Activated B cell treated with CpG ODN at 0.5 μM for 24 hours (primary cell): ENCODE measurements at regions of chr11 and their contacts with region 1.

Region 1: DNA sequence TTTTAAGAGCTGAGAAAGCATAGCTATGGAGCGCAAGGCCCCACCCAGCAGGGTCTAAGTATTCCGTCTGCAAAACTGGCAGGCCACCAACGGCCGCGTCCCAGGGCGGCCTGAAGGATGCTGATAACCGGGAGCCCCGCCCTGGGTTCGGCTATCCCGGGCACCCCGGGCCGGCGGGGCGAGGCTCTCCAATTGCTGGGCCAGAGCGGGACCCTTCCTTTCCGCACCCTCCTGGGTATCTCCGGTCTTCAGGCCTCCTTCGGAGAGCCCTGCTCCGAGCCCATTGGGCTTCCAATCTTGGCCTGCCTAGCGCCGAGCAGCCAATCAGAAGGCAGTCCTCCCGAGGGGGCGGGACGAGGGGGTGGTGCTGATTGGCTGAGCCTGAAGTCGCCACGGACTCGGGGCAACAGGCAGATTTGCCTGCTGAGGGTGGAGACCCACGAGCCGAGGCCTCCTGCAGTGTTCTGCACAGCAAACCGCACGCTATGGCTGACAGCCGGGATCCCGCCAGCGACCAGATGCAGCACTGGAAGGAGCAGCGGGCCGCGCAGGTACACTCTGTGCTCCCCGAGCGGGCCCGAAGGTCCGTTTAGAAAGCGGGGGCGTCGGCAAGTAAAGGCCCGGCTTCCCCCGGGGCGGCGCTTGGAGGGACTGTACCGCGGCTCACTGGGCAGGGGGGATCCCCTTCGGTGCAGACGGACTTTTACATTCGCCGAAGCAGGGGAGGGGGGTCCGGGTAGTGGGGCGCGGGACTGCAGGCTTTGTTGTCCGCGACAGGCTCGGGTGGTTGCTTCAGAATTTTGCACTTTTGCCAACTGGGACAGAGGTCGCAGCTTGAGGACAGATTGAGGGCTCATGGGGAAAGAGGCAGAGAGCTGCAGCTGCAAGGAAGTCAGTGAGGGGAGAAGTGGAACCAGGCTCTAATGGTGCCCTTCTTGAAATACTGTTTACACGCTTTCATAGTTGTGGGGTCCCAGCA is at the start of gene CAT:
- DNase-seq: peak; percentile 96
- ATAC-seq: peak; percentile 90
- H3K4me3 Mint-ChIP-seq: peak within 1 kb of the TSS; percentile 99
- H3K27ac Mint-ChIP-seq: peak within 1 kb of the TSS; percentile 98
- H3K4me1 Mint-ChIP-seq: peaks cover 43% of the 10 kb centered on the region
- H3K27me3 Mint-ChIP-seq: no peaks in the 10 kb centered on the region
- CTCF ChIP-seq: no peak
- total RNA-seq, gene CAT: 79.8 and 81.2 TPM in 2 replicates

Region 2: DNA sequence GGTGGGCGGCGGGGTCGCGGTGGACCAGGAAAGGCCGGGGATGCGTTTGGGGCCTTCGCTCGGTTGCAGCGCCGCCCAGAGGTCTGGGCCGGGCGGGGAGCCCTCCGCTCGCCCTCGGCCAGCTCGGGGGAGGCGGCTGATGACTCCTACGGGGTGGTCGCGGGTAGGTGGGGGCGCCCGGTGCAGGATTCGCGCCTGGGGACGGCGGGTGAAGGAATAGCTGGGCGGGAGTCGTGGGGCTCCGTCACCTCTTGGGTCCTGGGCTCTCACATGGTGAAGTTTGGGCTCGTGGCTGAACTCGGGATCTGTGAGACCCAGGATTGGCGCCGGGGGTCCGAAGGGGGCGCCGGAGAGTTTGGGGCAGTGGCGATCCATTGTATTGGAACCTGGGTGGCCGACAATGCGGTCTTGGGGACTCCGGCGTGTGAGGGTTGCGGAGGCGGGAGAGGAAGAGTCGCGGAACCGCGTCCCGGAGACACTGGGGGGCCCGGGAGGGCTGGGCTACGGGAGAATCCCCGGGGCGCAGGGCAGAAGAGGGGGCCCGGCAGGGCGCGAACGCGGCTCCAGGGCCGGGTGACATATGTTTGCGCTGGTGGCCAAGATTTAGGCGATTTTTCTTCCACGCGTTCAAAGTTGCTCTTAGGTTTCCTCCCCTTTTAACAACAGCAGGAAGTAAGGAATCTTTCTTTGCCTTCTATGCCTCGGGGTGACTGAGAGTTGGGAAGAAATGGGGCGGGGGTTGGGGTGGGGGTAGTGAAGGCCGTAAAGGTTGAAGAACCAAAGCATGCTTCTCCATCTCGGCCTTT is 1545.3 kb before region 1 on chr11:
- CTCF ChIA-PET with region 1: no interaction called
- POLR2A ChIA-PET with region 1: no interaction called
- intact Hi-C with region 1: loop called (anchors 5 kb)
- DNase-seq: peak; percentile 65
- ATAC-seq: peak; percentile 51
- H3K4me3 Mint-ChIP-seq: peak overlapping the region; percentile 94
- H3K27ac Mint-ChIP-seq: peak overlapping the region; percentile 82
- H3K4me1 Mint-ChIP-seq: peaks cover 30% of the 10 kb centered on the region
- H3K27me3 Mint-ChIP-seq: no peaks in the 10 kb centered on the region
- CTCF ChIP-seq: no peak

Region 3: GRCh38 chr11:33773987-33774735 is 664.7 kb before region 1 on chr11 and contains the start of gene FBXO3:
- CTCF ChIA-PET with region 1: no interaction called
- POLR2A ChIA-PET with region 1: interaction called, 4 read pairs
- intact Hi-C with region 1: loop called (anchors 2 kb)
- DNase-seq: peak; percentile 80
- ATAC-seq: peak; percentile 92
- H3K4me3 Mint-ChIP-seq: peak within 1 kb of the TSS; percentile 96
- H3K27ac Mint-ChIP-seq: peak within 1 kb of the TSS; percentile 94
- H3K4me1 Mint-ChIP-seq: peaks cover 38% of the 10 kb centered on the region
- H3K27me3 Mint-ChIP-seq: peaks cover 15% of the 10 kb centered on the region
- CTCF ChIP-seq: no peak
- total RNA-seq, gene FBXO3: 22.3 and 23.5 TPM in 2 replicates

Region 4: DNA sequence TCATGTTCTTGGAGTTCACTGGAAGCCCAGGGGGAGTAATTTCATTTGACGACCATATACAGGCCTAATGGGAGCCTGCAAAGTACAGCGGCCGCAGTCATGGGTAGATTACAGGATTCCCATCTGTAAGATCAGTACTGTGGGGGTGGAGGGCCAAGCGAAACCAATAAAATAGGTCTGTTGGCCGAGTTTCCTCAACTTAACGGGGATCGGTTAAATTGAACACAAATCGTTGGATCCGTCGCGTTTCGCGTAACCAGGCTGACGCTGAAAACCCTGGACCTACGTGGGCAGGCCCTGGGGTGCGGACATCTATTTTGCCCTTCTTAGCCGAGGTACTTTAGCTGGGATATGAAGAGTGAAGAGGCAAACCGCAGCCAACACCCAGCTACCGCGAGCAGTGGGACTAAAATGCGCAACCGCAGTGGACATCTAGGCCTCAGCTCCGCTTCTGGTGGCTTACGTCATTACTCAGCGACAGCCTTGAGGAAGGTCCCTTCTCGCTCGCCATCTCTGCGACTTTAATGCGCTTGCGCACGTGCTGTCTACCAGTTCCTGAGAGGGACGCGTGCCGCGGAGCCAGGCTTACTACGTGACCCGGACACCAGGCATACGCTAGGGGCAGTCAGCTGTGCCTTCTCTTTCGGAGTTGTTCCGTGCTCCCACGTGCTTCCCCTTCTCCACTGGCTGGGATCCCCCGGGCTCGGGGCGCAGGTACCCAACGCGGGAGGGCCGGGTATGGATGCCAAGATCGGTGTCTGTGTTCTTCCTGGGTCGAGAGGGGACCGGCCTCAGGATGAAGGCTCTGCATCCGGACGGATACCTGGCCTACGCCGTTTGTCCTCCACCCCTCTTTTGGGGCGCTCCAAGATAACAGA is 333.5 kb before region 1 on chr11 and contains the start of gene NAT10:
- CTCF ChIA-PET with region 1: no interaction called
- POLR2A ChIA-PET with region 1: interaction called, 3 read pairs
- intact Hi-C with region 1: loop called (anchors 1 kb)
- DNase-seq: peak; percentile 91
- ATAC-seq: peak; percentile 92
- H3K4me3 Mint-ChIP-seq: peak within 1 kb of the TSS; percentile 97
- H3K27ac Mint-ChIP-seq: peak within 1 kb of the TSS; percentile 98
- H3K4me1 Mint-ChIP-seq: peaks cover 41% of the 10 kb centered on the region
- H3K27me3 Mint-ChIP-seq: peaks cover 2% of the 10 kb centered on the region
- CTCF ChIP-seq: no peak
- total RNA-seq, gene NAT10: 107 and 120 TPM in 2 replicates

Region 5: DNA sequence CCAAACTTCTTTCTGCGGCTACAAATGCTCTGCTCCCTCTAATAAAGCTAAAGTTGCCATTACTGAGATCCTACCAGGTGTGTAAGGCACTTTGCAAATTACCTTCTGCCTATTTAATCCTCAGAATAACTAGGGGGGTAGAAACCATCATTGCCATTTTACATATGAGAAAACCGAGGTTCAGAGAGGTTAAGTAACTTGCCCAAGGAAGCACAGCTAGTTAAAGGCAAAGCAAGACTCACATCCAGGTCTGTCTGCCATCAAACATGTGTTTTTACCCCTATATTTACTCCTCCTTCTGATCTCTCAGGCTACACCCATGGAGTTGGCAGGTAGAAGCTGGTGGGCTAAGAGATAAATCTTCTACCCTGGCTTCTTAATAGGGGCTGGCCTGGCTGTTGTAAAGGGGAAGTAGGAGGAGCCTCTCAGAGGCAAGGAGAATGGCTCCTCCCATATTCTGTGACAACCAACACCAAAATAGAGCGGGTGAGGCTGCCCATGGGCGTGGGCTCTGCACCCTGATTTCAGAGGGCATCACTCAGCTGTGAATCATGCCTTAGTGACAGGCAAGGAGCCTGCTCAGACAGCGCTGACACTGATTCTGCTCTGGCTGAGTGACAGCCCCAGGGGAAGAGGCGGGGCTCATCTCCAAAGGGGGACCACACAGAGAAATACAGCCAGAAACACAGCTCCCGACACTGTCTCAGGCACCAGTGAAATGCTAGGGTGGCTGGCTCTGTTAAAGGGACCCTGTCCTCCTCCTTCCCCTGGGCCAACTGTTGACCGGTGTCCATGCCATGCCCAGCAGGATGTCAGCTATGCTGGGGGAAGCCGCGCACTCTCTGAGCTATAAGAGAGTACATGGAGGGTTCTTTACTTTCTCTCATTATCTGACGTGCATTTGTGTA is 187.8 kb before region 1 on chr11:
- CTCF ChIA-PET with region 1: no interaction called
- POLR2A ChIA-PET with region 1: no interaction called
- intact Hi-C with region 1: loop called (anchors 5 kb)
- DNase-seq: peak; percentile 63
- ATAC-seq: peak; percentile 98
- H3K4me3 Mint-ChIP-seq: peak overlapping the region; percentile 55
- H3K27ac Mint-ChIP-seq: peak overlapping the region; percentile 71
- H3K4me1 Mint-ChIP-seq: peaks cover 55% of the 10 kb centered on the region
- H3K27me3 Mint-ChIP-seq: no peaks in the 10 kb centered on the region
- CTCF ChIP-seq: no peak

Region 6: DNA sequence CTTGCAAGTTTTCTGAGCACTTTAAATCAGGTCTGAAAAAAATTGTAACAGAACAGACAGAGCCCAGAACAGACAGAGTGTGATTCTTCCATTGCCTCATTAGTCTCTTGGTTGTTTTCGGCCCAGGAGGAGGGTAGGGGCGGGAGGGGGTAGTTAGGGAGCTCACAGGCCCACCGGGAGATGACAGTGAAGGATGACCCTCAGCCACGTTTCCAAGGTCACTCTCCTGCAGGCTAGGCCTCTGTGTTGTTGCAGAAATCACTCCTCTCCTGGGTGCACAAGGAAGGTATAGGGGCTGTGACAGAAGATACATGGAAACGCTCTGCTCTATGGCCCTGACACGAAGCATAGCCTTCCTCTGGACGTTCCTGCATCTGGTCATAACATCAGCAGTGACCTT is 150.3 kb before region 1 on chr11:
- CTCF ChIA-PET with region 1: no interaction called
- POLR2A ChIA-PET with region 1: no interaction called
- intact Hi-C with region 1: no loop called
- DNase-seq: no peak
- ATAC-seq: no peak
- H3K4me3 Mint-ChIP-seq: no peak overlapping the region
- H3K27ac Mint-ChIP-seq: no peak overlapping the region
- H3K4me1 Mint-ChIP-seq: no peaks in the 10 kb centered on the region
- H3K27me3 Mint-ChIP-seq: no peaks in the 10 kb centered on the region
- CTCF ChIP-seq: no peak

Region 7: DNA sequence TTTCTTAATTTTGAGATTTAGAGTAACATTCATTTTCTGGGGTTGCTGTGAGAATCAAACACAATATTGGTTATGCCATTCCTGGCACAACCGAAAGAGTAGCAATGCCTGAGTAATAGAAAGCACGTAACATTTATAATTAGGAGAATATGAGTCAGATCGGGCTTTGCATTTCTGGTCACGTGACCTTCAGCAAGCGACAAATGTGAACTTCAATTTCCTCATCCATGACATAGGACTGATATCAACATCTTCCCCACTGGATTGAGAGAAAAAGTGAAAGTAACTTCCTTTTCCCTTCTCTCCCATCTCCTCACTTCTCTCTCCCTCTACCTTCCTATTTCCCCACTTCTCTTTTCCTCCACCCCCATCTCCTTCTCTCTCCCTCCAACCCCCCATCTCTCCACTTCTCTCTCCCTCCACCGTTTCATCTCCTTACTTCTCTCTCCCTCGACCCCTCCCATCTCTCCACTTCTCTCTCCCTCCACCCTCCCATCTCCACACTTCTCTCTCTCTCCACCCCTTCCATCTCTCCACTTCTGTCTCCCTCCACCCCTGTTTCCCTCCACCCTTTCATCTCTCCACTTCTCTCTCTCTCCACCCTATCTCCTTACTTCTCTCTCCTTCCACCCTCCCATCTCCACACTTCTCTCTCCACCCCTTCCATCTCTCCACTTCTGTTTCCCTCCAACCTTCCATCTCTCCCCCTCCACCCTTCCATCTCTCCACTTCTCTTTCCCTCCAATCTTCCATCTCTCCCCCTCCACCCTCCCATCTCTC is 33.5 kb before region 1 on chr11:
- CTCF ChIA-PET with region 1: no interaction called
- POLR2A ChIA-PET with region 1: no interaction called
- intact Hi-C with region 1: no loop called
- DNase-seq: no peak
- ATAC-seq: no peak
- H3K4me3 Mint-ChIP-seq: no peak overlapping the region
- H3K27ac Mint-ChIP-seq: no peak overlapping the region
- H3K4me1 Mint-ChIP-seq: peaks cover 3% of the 10 kb centered on the region
- H3K27me3 Mint-ChIP-seq: peaks cover 15% of the 10 kb centered on the region
- CTCF ChIP-seq: no peak

Region 8: GRCh38 chr11:34449013-34449412 is 10.2 kb after region 1 on chr11:
- CTCF ChIA-PET with region 1: no interaction called
- POLR2A ChIA-PET with region 1: interaction called, 4 read pairs
- intact Hi-C with region 1: loop called (anchors 1 kb)
- DNase-seq: no peak
- ATAC-seq: peak; percentile 62
- H3K4me3 Mint-ChIP-seq: peak overlapping the region; percentile 30
- H3K27ac Mint-ChIP-seq: peak overlapping the region; percentile 47
- H3K4me1 Mint-ChIP-seq: peaks cover 53% of the 10 kb centered on the region
- H3K27me3 Mint-ChIP-seq: no peaks in the 10 kb centered on the region
- CTCF ChIP-seq: no peak

Region 9: GRCh38 chr11:34468209-34468841 is 29.5 kb after region 1 on chr11:
- CTCF ChIA-PET with region 1: no interaction called
- POLR2A ChIA-PET with region 1: no interaction called
- intact Hi-C with region 1: loop called (anchors 2 kb)
- DNase-seq: no peak
- ATAC-seq: peak; percentile 66
- H3K4me3 Mint-ChIP-seq: no peak overlapping the region
- H3K27ac Mint-ChIP-seq: no peak overlapping the region
- H3K4me1 Mint-ChIP-seq: no peaks in the 10 kb centered on the region
- H3K27me3 Mint-ChIP-seq: no peaks in the 10 kb centered on the region
- CTCF ChIP-seq: no peak

Region 10: GRCh38 chr11:34624069-34624468 is 185.3 kb after region 1 on chr11:
- CTCF ChIA-PET with region 1: no interaction called
- POLR2A ChIA-PET with region 1: no interaction called
- intact Hi-C with region 1: no loop called
- DNase-seq: peak; percentile 46
- ATAC-seq: peak; percentile 94
- H3K4me3 Mint-ChIP-seq: peak overlapping the region; percentile 66
- H3K27ac Mint-ChIP-seq: peak overlapping the region; percentile 37
- H3K4me1 Mint-ChIP-seq: peaks cover 31% of the 10 kb centered on the region
- H3K27me3 Mint-ChIP-seq: peaks cover 6% of the 10 kb centered on the region
- CTCF ChIP-seq: no peak